ENCODE measurements at regions of chr2 and their contacts with region 1.

Region 1: DNA sequence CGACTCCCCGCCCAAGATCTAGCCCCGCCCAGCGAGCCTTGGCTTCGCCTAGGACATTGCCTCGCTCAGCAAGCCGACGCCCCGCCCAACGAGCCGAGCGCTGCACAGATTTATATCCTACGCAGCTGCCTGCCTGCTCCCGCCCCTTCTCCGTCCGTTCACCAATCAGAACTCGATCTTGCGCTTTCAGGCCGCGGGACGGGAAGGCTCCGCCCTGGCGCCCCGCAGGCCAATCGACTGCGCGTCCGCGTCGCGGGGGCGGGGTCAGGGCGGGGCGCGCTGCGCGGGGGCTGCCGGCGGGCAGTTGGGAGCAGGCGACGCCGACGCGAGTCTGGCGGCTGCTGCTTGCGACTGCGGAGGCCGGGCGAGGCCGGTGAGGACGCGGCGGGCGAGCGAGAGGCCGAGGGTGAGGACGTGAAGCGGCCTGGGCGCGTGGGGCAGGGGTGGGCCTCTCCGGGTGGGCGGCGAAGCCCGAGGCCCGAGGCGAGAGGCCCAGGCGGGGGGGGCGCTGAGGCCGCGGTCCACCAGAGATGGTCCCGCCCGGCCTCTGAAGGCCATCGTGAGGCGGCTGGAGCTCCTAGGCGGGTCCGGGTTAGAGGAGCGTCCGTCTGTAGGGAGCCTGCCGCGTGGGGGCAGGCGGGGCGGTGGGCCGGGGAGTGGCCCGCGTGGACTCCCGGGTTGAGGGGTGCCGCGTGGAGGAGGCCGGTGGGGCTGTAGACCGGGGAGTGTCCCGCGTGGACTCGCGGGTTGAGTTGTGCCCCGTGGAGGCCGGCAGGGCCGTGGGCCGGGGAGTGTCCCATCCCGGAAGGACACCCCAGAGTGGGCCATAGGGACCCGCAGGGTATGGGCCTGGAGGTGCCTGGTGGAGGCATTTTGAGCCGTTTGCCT is at the start of gene FARP2:
- DNase-seq: peak; percentile 97 to 100
- H3K4me3 ChIP-seq: peak within 1 kb of the TSS; percentile 89
- H3K27ac ChIP-seq: peak within 1 kb of the TSS; percentile 53
- H3K4me1 ChIP-seq: peaks cover 44% of the 10 kb centered on the region
- H3K27me3 ChIP-seq: no peaks in the 10 kb centered on the region
- CTCF ChIP-seq: no peak
- total RNA-seq, gene FARP2: 81.5 and 89.1 TPM in 2 replicates

Region 2: DNA sequence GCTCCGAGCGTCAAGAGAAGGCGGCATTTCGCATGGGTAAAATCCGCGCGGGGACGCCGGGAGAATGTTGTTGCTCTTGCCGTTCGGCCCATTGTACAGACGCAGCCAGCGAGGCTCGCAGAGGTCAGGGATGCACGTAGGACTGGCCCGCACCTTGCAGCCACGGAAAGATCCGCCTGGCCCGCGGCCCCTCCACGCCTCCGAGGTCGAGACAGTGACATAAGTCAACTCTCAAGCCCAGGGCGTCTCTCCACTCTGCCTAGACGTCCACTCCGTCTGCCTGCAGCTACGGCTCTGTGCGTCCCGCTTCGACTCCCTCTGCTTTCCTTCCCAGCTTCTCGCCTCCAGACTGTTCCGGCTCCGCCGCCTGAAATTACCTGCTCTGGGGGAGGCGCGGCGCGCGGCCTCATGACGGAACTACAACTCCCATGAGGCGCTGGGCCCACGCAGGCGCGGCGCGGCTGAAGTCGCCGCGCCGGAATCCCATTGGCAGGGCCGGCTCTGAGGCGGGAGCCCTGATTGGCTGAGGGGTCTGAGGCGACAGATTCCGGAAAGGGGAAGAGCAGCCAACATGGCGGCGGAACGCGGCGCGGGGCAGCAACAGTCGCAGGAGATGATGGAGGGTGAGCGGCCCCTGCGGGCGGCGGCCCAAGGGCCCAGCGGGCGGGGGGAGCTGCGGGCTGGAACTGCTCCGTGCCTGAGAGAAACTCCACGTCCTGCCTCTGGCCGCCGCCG is 206.1 kb before region 1 on chr2 and contains the start of gene PPP1R7:
- CTCF ChIA-PET with region 1: no interaction called
- POLR2A ChIA-PET with region 1: no interaction called
- intact Hi-C with region 1: loop called (anchors 5 kb)
- DNase-seq: peak; percentile 94 to 97
- H3K4me3 ChIP-seq: peak within 1 kb of the TSS; percentile 76
- H3K27ac ChIP-seq: no peak within 1 kb of the TSS
- H3K4me1 ChIP-seq: peaks cover 17% of the 10 kb centered on the region
- H3K27me3 ChIP-seq: no peaks in the 10 kb centered on the region
- CTCF ChIP-seq: no peak
- total RNA-seq, gene PPP1R7: 113 and 143 TPM in 2 replicates

Region 3: GRCh38 chr2:241372361-241372992 is 16.2 kb after region 1 on chr2:
- CTCF ChIA-PET with region 1: interaction called, 14 read pairs
- POLR2A ChIA-PET with region 1: interaction called, 3 read pairs
- intact Hi-C with region 1: loop called (anchors 2 kb)
- DNase-seq: no peak
- H3K4me3 ChIP-seq: no peak overlapping the region
- H3K27ac ChIP-seq: no peak overlapping the region
- H3K4me1 ChIP-seq: peaks cover 51% of the 10 kb centered on the region
- H3K27me3 ChIP-seq: no peaks in the 10 kb centered on the region
- CTCF ChIP-seq: no peak

Region 4: DNA sequence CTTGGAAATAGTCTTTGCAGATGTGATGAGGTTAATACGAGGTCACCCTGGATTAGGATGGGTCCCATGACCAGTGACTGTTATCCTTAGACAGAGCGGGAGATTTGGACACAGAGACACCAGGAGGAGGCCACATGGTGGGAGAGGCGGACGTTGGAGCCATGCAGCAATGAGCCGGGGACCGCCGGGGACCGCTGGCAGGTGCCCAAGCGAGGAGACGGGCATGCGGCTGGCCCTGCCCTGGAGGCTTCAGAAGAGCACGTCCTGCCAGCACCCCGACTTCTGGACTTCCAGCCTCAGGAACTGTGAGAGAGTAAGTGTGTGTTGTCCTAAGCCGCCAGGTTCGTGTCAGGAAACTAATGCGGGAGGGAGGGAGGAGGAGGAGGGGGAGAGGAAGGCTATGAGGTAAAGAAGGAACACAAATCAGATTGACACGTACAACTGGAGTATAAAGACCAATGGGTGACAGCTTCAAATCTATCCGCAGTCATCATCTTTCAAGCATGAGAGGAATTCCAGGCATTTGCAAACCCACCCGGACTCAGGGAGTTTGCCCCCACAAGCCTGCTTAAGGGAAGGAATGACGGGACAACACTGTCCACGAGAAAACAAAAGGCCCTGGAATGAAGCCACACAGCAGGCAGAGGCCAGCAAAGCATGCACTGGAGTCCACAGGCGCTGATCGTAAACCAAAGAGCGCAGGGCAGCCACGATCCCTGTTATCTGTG is 190.7 kb after region 1 on chr2:
- CTCF ChIA-PET with region 1: interaction called, 4 read pairs
- POLR2A ChIA-PET with region 1: no interaction called
- intact Hi-C with region 1: loop called (anchors 5 kb)
- DNase-seq: peak in 1 of 2 experiments; percentile 76
- H3K4me3 ChIP-seq: no peak overlapping the region
- H3K27ac ChIP-seq: no peak overlapping the region
- H3K4me1 ChIP-seq: peaks cover 16% of the 10 kb centered on the region
- H3K27me3 ChIP-seq: no peaks in the 10 kb centered on the region; the same call in 1 of the 2 replicates
- CTCF ChIP-seq: no peak

Region 5: DNA sequence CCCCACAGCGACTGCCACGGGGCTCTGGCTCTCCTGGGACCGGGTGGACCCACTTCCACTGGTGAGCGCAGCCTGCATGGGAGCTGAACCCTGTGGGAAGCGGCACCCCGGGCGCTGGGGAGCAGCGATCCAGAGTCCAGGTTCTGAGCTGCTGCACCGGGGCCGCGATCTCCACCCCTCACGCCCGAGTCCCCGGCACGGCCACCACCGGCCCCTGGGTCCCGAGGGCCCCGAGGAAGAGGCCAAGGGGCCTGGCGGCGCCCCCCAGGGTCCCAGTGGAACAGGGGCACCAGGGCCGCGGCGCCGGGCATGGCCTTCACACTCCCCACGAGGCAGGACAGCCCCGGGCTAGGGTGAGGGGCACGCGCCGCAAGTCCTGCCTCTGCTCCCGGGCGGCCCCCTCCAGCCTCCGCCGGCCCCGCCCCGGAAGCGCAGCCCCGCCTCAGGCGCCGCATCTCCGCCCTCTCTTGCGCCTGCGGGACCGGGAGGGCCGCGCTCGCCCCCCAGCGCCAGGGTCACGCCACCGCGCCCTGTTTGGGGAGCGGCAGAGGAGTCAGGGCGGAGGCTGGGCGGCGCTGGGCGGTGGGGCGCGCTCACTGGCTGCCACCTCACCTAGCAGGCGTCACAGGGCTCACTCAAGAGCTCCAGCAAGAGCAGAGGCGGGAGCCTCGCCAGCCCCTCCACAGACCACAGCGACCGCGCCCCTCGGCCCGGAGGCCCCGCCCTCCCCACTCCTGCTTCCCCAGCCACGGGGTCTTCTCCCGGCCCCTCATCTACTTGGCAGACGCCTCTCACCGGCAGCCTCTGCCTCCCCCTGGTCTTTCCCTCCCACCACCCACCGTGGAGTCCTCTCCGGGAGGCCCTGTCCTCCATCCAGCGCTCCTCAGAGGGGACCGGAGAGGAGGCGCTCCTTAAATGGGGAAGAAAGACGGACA is 253.9 kb after region 1 on chr2:
- CTCF ChIA-PET with region 1: no interaction called
- POLR2A ChIA-PET with region 1: no interaction called
- intact Hi-C with region 1: loop called (anchors 1 kb)
- DNase-seq: peak in 1 of 2 experiments; percentile 98
- H3K4me3 ChIP-seq: no peak overlapping the region
- H3K27ac ChIP-seq: no peak overlapping the region
- H3K4me1 ChIP-seq: no peaks in the 10 kb centered on the region
- H3K27me3 ChIP-seq: no peaks in the 10 kb centered on the region
- CTCF ChIP-seq: no peak

Region 6: DNA sequence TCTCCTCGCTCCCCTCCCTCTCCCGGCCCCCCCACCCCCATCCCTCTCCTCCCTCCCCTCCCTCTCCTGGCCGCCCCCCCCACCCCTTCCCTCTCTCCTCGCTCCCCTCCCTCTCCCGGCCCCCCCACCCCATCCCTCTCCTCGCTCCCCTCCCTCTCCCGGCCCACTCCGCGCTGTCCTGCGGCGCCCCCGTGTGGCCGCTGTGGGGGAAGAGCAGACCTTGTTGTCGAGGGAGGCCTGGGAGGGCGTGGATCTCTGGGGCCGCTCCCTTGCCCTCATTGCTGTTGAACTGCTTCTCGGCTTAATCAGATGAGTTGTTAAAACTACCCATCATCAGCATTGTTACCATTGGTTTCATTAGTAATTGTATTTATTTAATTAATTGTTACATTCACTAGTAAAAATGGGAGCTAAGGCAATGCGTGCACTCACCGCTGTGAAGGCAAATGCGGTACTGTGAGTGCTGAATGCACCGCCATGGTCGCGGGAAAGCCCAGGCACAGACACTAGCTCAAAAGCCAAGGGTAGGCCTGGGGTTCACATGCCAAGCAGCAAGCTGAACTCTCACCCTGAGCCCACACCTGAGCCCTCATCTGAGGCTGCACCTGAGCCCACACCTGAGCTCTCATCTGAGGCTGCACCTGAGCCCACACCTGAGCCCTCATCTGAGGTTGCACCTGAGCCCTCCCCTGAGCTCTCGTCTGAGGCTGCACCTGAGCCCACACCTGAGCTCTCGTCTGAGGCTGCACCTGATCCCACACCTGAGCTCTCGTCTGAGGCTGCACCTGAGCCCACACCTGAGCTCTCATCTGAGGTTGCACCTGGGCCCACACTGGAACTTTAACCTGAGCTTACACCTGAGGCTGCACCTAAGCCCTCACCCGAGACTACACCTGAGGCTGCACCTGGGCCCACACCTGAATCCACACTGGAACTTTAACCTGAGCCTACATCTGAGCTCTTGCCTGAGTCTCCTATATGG is 522.1 kb after region 1 on chr2:
- CTCF ChIA-PET with region 1: no interaction called
- POLR2A ChIA-PET with region 1: no interaction called
- intact Hi-C with region 1: loop called (anchors 1 kb)
- DNase-seq: peak in 1 of 2 experiments; percentile 88
- H3K4me3 ChIP-seq: no peak overlapping the region
- H3K27ac ChIP-seq: no peak overlapping the region
- H3K4me1 ChIP-seq: peaks cover 5% of the 10 kb centered on the region
- H3K27me3 ChIP-seq: no peaks in the 10 kb centered on the region
- CTCF ChIP-seq: peak; percentile 79

Measured in PC-9 (cell line).